Caco-2 (cell line): ENCODE measurements at regions of chr11 and their contacts with region 1.

Region 1: GRCh38 chr11:130979386-130979972 is 63.2 kb upstream of the SNX19 start:
- DNase-seq: peak in 1 of 2 experiments; percentile 20
- H3K4me3 ChIP-seq: no peak overlapping the region
- H3K4me3 Mint-ChIP-seq: no peak overlapping the region
- H3K27ac Mint-ChIP-seq: no peak overlapping the region
- H3K4me1 ChIP-seq: no peaks in the 10 kb centered on the region
- H3K4me1 Mint-ChIP-seq: no peaks in the 10 kb centered on the region
- H3K27me3 ChIP-seq: no peaks in the 10 kb centered on the region
- H3K27me3 Mint-ChIP-seq: peaks cover 25% of the 10 kb centered on the region
- CTCF ChIP-seq: peak; percentile 52 to 66

Region 2: GRCh38 chr11:130924770-130925169 is 54.7 kb before region 1 on chr11:
- CTCF ChIA-PET with region 1: interaction called, 12 read pairs
- POLR2A ChIA-PET with region 1: no interaction called
- intact Hi-C with region 1: loop called (anchors 1 kb)
- DNase-seq: no peak
- H3K4me3 ChIP-seq: no peak overlapping the region
- H3K4me3 Mint-ChIP-seq: no peak overlapping the region
- H3K27ac Mint-ChIP-seq: no peak overlapping the region
- H3K4me1 ChIP-seq: no peaks in the 10 kb centered on the region
- H3K4me1 Mint-ChIP-seq: no peaks in the 10 kb centered on the region
- H3K27me3 ChIP-seq: peaks cover 1% of the 10 kb centered on the region; the same call in 1 of the 2 replicates
- H3K27me3 Mint-ChIP-seq: peaks cover 18% of the 10 kb centered on the region
- CTCF ChIP-seq: no peak

Region 3: DNA sequence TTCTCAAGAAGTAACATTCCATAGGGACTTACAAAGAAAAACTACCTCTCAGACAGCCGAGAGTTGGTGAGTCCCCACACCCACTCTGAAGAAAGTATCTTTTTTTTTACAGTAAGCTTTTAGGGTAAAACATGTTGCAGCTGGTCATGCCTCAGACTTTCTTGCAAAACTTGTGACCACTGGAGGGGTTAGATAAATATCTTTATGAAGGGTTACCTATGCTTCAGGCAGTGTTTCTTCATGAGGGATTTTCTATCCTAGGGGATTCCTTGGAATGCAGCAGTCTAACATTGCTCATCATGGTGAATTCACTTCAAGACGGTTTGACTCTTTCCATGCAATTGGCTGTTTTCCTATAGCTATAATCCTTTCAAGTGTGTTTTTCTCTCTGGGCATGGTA is 42.4 kb before region 1 on chr11:
- CTCF ChIA-PET with region 1: no interaction called
- POLR2A ChIA-PET with region 1: no interaction called
- intact Hi-C with region 1: no loop called
- DNase-seq: no peak
- H3K4me3 ChIP-seq: no peak overlapping the region
- H3K4me3 Mint-ChIP-seq: no peak overlapping the region
- H3K27ac Mint-ChIP-seq: no peak overlapping the region
- H3K4me1 ChIP-seq: no peaks in the 10 kb centered on the region
- H3K4me1 Mint-ChIP-seq: no peaks in the 10 kb centered on the region
- H3K27me3 ChIP-seq: no peaks in the 10 kb centered on the region
- H3K27me3 Mint-ChIP-seq: peaks cover 26% of the 10 kb centered on the region
- CTCF ChIP-seq: no peak

Region 4: DNA sequence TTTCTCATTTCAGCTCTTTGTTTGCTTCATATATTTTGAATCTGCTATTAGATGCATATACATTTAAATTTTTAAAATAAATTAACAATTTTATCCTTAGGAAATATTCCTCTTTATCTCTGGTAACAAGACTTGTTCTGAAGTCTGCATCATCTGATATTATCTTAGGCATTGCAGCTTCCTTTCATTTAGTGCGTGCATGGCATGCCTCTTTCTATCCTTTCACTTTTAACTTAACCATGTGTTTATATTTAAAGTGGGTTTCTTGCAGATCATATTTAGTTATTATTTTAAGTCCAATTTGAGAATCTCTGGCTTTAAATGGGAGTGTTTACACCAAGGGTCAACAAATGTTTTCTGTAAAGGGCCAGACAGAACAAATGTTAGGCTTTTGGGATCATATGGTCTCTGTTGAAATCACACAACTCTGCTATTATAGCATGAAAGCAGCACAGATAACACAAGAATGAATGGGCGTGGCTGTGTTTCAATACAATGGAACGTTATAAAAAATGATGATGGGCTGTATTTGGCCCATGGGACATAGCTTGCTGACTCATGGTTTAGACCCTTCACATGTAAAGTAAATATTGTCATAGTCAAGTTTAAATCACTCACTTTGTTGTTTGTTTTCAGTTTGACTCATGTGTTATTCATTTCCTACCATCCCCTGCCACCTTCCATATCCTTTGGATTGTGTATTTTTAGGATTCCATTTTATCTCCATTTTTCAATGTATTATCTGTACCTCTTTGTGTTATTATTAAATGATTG is 20.7 kb after region 1 on chr11:
- CTCF ChIA-PET with region 1: no interaction called
- POLR2A ChIA-PET with region 1: no interaction called
- intact Hi-C with region 1: no loop called
- DNase-seq: peak; percentile 47 to 57
- H3K4me3 ChIP-seq: no peak overlapping the region
- H3K4me3 Mint-ChIP-seq: no peak overlapping the region
- H3K27ac Mint-ChIP-seq: no peak overlapping the region
- H3K4me1 ChIP-seq: peaks cover 7% of the 10 kb centered on the region; the same call in 1 of the 2 replicates
- H3K4me1 Mint-ChIP-seq: peaks cover 21% of the 10 kb centered on the region
- H3K27me3 ChIP-seq: no peaks in the 10 kb centered on the region
- H3K27me3 Mint-ChIP-seq: peaks cover 5% of the 10 kb centered on the region
- CTCF ChIP-seq: no peak